Activated naive CD4-positive, alpha-beta T cell treated with anti-CD3 and anti-CD28 coated beads for 36 hours (primary cell): ENCODE measurements at regions of chr2 and their contacts with region 1.

Region 1: GRCh38 chr2:44955593-44956392 is 14.3 kb downstream of the SIX3 start:
- DNase-seq: peak; percentile 87
- H3K4me3 Mint-ChIP-seq: no peak overlapping the region
- H3K27ac Mint-ChIP-seq: no peak overlapping the region
- H3K4me1 Mint-ChIP-seq: peaks cover 18% of the 10 kb centered on the region
- H3K27me3 Mint-ChIP-seq: peaks cover 54% of the 10 kb centered on the region

Region 2: DNA sequence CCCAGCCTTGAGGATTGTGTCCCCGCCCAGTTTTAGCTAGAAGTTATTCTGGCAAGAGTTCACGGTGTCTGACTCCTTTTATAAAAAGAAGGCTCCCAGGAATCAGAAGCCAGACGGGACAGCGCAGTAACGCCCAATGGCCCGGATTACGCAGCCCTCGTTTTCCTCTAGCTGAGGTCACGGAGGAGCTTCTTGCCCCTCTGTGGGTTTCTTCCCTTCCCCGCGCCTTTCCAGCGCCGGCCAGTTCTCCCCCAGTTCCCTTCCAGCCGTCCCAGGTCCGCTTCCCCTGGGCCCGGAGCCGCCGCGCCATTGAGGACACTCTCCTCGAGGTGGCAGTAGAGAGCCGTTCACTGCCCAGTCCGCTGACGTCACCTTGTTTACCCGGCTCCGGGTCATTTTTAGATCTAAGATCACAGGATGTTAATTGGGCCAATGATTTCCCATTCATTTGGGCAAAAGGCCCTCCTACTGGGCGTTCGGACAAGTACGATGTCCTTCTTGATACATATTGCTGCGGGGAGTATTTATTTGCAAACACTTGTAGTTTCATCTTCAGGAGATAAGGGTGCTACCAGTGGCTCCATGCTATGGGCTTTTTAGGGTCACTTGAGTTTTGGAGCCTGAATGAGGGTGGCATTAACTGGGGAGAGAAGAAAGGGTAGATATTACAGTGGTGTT is 868.6 kb before region 1 on chr2:
- CTCF ChIA-PET with region 1: interaction called, 4 read pairs
- intact Hi-C with region 1: loop called (anchors 1 kb)
- DNase-seq: peak; percentile 91
- H3K4me3 Mint-ChIP-seq: peak overlapping the region; percentile 66
- H3K27ac Mint-ChIP-seq: peak overlapping the region; percentile 54
- H3K4me1 Mint-ChIP-seq: peaks cover 13% of the 10 kb centered on the region
- H3K27me3 Mint-ChIP-seq: no peaks in the 10 kb centered on the region

Region 3: GRCh38 chr2:44392338-44392943 is 563.4 kb before region 1 on chr2:
- CTCF ChIA-PET with region 1: interaction called, 27 read pairs
- intact Hi-C with region 1: loop called (anchors 1 kb)
- DNase-seq: peak; percentile 72
- H3K4me3 Mint-ChIP-seq: no peak overlapping the region
- H3K27ac Mint-ChIP-seq: no peak overlapping the region
- H3K4me1 Mint-ChIP-seq: peaks cover 5% of the 10 kb centered on the region
- H3K27me3 Mint-ChIP-seq: no peaks in the 10 kb centered on the region

Region 4: GRCh38 chr2:44879269-44880124 is 76.3 kb before region 1 on chr2:
- CTCF ChIA-PET with region 1: no interaction called
- intact Hi-C with region 1: no loop called
- DNase-seq: no peak
- H3K4me3 Mint-ChIP-seq: no peak overlapping the region
- H3K27ac Mint-ChIP-seq: no peak overlapping the region
- H3K4me1 Mint-ChIP-seq: no peaks in the 10 kb centered on the region
- H3K27me3 Mint-ChIP-seq: peaks cover 19% of the 10 kb centered on the region

Region 5: GRCh38 chr2:44930274-44931197 is 25.3 kb before region 1 on chr2:
- CTCF ChIA-PET with region 1: interaction called, 15 read pairs
- intact Hi-C with region 1: no loop called
- DNase-seq: no peak
- H3K4me3 Mint-ChIP-seq: peak overlapping the region; percentile 32
- H3K27ac Mint-ChIP-seq: no peak overlapping the region
- H3K4me1 Mint-ChIP-seq: peaks cover 31% of the 10 kb centered on the region
- H3K27me3 Mint-ChIP-seq: peaks cover 78% of the 10 kb centered on the region